Activated CD8-positive, alpha-beta T cell treated with anti-CD3 and anti-CD28 coated beads for 36 hours (primary cell): ENCODE measurements at regions of chr13 and their contacts with region 1.

Region 1: GRCh38 chr13:26985285-26985878 is 186.2 kb downstream of the USP12 start:
- DNase-seq: peak; percentile 86
- ATAC-seq: peak; percentile 90
- H3K4me3 Mint-ChIP-seq: no peak overlapping the region
- H3K27ac Mint-ChIP-seq: no peak overlapping the region
- H3K4me1 Mint-ChIP-seq: no peaks in the 10 kb centered on the region
- H3K27me3 Mint-ChIP-seq: peaks cover 11% of the 10 kb centered on the region
- CTCF ChIP-seq: peak; percentile 76

Region 2: GRCh38 chr13:26965952-26966700 is 19.3 kb before region 1 on chr13:
- CTCF ChIA-PET with region 1: interaction called, 15 read pairs
- POLR2A ChIA-PET with region 1: no interaction called
- intact Hi-C with region 1: no loop called
- DNase-seq: no peak
- ATAC-seq: no peak
- H3K4me3 Mint-ChIP-seq: no peak overlapping the region
- H3K27ac Mint-ChIP-seq: no peak overlapping the region
- H3K4me1 Mint-ChIP-seq: no peaks in the 10 kb centered on the region
- H3K27me3 Mint-ChIP-seq: no peaks in the 10 kb centered on the region
- CTCF ChIP-seq: no peak

Region 3: DNA sequence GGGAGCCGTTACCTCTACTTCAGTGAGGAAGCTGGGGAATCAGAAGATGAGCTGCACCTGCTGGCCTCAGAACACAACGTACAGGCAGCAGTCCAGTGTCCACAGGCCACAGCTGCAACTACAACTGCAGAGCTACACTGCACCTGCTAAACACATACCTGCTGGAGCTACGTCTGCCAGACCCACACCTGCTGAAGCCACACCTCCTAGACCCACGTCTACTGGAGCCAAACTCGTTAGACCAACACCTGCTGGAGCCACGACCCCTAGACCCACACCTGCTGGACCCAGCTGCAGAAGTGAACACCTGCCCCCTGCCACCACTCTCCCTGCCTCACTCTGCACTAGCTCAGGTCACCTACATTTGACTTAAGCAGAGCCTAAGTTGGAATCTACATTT is 16.3 kb after region 1 on chr13:
- CTCF ChIA-PET with region 1: interaction called, 11 read pairs
- POLR2A ChIA-PET with region 1: no interaction called
- intact Hi-C with region 1: no loop called
- DNase-seq: no peak
- ATAC-seq: no peak
- H3K4me3 Mint-ChIP-seq: no peak overlapping the region
- H3K27ac Mint-ChIP-seq: no peak overlapping the region
- H3K4me1 Mint-ChIP-seq: peaks cover 8% of the 10 kb centered on the region
- H3K27me3 Mint-ChIP-seq: peaks cover 40% of the 10 kb centered on the region
- CTCF ChIP-seq: no peak

Region 4: GRCh38 chr13:27276188-27276587 is 290.8 kb after region 1 on chr13:
- CTCF ChIA-PET with region 1: interaction called, 22 read pairs
- POLR2A ChIA-PET with region 1: no interaction called
- intact Hi-C with region 1: no loop called
- DNase-seq: no peak
- ATAC-seq: no peak
- H3K4me3 Mint-ChIP-seq: no peak overlapping the region
- H3K27ac Mint-ChIP-seq: no peak overlapping the region
- H3K4me1 Mint-ChIP-seq: peaks cover 3% of the 10 kb centered on the region
- H3K27me3 Mint-ChIP-seq: no peaks in the 10 kb centered on the region
- CTCF ChIP-seq: no peak

Region 5: DNA sequence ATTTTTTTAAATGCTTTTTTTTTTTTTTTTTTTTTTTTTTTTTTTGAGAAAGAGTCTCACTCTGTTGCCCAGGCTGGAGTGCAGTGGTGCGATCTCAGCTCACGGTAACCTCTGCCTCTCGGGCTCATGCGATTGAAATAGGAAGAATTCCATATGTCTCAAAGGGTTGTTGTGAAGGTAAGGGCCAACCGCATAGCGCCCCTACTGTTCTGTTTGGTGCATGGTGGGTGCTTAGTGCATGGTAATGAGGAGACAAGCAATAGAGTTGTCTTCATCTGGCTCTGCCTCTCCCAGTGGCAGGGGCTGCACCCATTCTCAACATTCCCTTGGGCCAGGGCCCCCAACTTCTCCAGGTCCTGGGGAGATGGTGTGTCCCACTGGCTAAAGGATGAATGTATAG is 353.9 kb after region 1 on chr13:
- CTCF ChIA-PET with region 1: interaction called, 16 read pairs
- POLR2A ChIA-PET with region 1: no interaction called
- intact Hi-C with region 1: no loop called
- DNase-seq: peak; percentile 70
- ATAC-seq: peak; percentile 86
- H3K4me3 Mint-ChIP-seq: no peak overlapping the region
- H3K27ac Mint-ChIP-seq: no peak overlapping the region
- H3K4me1 Mint-ChIP-seq: peaks cover 3% of the 10 kb centered on the region
- H3K27me3 Mint-ChIP-seq: no peaks in the 10 kb centered on the region
- CTCF ChIP-seq: peak; percentile 70

Region 6: GRCh38 chr13:27362064-27362883 is 376.9 kb after region 1 on chr13:
- CTCF ChIA-PET with region 1: interaction called, 151 read pairs
- POLR2A ChIA-PET with region 1: interaction called, 5 read pairs
- intact Hi-C with region 1: loop called (anchors 1 kb)
- DNase-seq: peak; percentile 90
- ATAC-seq: peak; percentile 98
- H3K4me3 Mint-ChIP-seq: peak overlapping the region; percentile 48
- H3K27ac Mint-ChIP-seq: no peak overlapping the region
- H3K4me1 Mint-ChIP-seq: peaks cover 4% of the 10 kb centered on the region
- H3K27me3 Mint-ChIP-seq: peaks cover 7% of the 10 kb centered on the region
- CTCF ChIP-seq: peak; percentile 87